HCT116 (cell line): ENCODE measurements at regions of chr2 and their contacts with region 1.

Region 1: GRCh38 chr2:23926750-23927571 is at the start of gene ATAD2B:
- DNase-seq: peak; percentile 85
- ATAC-seq: peak; percentile 93
- H3K4me3 ChIP-seq: peak within 1 kb of the TSS; percentile 79 to 84
- H3K27ac ChIP-seq: peak within 1 kb of the TSS; percentile 86
- H3K4me1 ChIP-seq: peaks cover 5 to 7% of the 10 kb centered on the region in 2 experiments; a peak in 2 of 4 replicates
- H3K27me3 ChIP-seq: no peaks in the 10 kb centered on the region
- CTCF ChIP-seq: peak; percentile 61 to 77 (median 71)
- POLR2A ChIP-seq: peak; percentile 76
- RAD21 ChIP-seq: peak; percentile 77
- total RNA-seq, gene ATAD2B: 9.6 TPM

Region 2: GRCh38 chr2:23824777-23825212 is 102.2 kb before region 1 on chr2:
- CTCF ChIA-PET with region 1: interaction called, 24 read pairs
- POLR2A ChIA-PET with region 1: no interaction called
- RAD21 ChIA-PET with region 1: interaction called in 1 of 2 experiments, 5 read pairs
- intact Hi-C with region 1: no loop called
- DNase-seq: peak; percentile 36
- ATAC-seq: peak; percentile 72
- H3K4me3 ChIP-seq: no peak overlapping the region
- H3K27ac ChIP-seq: no peak overlapping the region
- H3K4me1 ChIP-seq: no peaks in the 10 kb centered on the region; a peak in 1 of 4 replicates
- H3K27me3 ChIP-seq: no peaks in the 10 kb centered on the region
- CTCF ChIP-seq: peak; percentile 58 to 81 (median 81)
- POLR2A ChIP-seq: no peak
- RAD21 ChIP-seq: peak; percentile 77

Region 3: DNA sequence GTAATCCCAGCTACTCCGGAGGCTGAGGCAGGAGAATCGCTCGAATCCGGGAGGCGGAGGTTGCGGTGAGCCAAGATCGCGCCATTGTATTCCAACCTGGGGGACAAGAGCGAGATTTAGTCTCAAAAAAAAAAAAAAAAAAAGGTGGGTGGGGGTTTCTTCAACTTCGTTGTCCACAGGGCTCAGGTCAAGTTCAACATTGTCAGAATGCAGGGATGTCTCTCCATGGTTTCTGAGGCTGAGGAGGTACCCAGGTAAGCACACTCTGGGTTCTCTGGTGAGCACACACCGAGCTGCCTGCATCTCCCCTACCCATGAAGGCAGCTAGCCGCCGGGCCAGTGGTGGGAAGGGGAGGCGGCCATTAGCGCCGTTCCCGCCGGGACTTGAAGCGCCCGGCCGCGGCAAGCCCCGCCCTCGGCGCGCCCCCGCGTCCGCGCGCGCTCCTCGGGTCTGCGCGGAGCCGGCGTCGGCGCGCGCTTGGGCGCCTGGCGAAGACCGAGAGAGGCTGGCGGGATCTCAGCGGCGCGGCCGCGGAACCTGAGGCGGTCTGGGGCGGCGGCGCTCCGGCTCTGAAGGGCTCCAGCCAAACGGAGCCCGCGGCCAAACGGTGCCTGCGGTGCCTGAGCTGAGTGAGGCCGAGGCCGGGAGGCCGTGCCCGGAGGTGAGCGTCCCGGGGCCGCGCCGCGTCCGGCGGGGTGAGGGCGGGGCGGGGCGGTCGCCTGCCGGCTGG is 13.2 kb after region 1 on chr2 and contains the start of gene UBXN2A:
- CTCF ChIA-PET with region 1: interaction called, 10 read pairs
- POLR2A ChIA-PET with region 1: interaction called, 5 read pairs
- RAD21 ChIA-PET with region 1: interaction called in 1 of 2 experiments, 3 read pairs
- intact Hi-C with region 1: no loop called
- DNase-seq: peak; percentile 45
- ATAC-seq: peak; percentile 88
- H3K4me3 ChIP-seq: peak within 1 kb of the TSS; percentile 61 to 75
- H3K27ac ChIP-seq: peak within 1 kb of the TSS; percentile 70
- H3K4me1 ChIP-seq: peaks cover 4 to 30% of the 10 kb centered on the region in 2 experiments; a peak in 3 of 4 replicates
- H3K27me3 ChIP-seq: no peaks in the 10 kb centered on the region
- CTCF ChIP-seq: no peak
- POLR2A ChIP-seq: peak; percentile 84
- RAD21 ChIP-seq: no peak
- total RNA-seq, gene UBXN2A: 14.1 TPM

Region 4: GRCh38 chr2:24075915-24076848 is 149.2 kb after region 1 on chr2 and contains the start of gene SF3B6:
- CTCF ChIA-PET with region 1: interaction called, 9 read pairs
- POLR2A ChIA-PET with region 1: interaction called, 26 read pairs
- RAD21 ChIA-PET with region 1: interaction called in 1 of 2 experiments, 6 read pairs
- intact Hi-C with region 1: no loop called
- DNase-seq: peak; percentile 99
- ATAC-seq: peak; percentile 86
- H3K4me3 ChIP-seq: peak within 1 kb of the TSS; percentile 73 to 77
- H3K27ac ChIP-seq: peak within 1 kb of the TSS; percentile 81
- H3K4me1 ChIP-seq: peaks cover 4 to 15% of the 10 kb centered on the region in 2 experiments; a peak in 3 of 4 replicates
- H3K27me3 ChIP-seq: no peaks in the 10 kb centered on the region
- CTCF ChIP-seq: no peak
- POLR2A ChIP-seq: peak; percentile 63
- RAD21 ChIP-seq: no peak
- total RNA-seq, gene SF3B6: 129 TPM

Region 5: GRCh38 chr2:24164125-24164973 is 237.4 kb after region 1 on chr2:
- CTCF ChIA-PET with region 1: interaction called, 6 read pairs
- POLR2A ChIA-PET with region 1: no interaction called
- RAD21 ChIA-PET with region 1: no interaction called
- intact Hi-C with region 1: loop called (anchors 5 kb)
- DNase-seq: peak; percentile 22
- ATAC-seq: peak; percentile 86
- H3K4me3 ChIP-seq: no peak overlapping the region
- H3K27ac ChIP-seq: no peak overlapping the region
- H3K4me1 ChIP-seq: no peaks in the 10 kb centered on the region
- H3K27me3 ChIP-seq: no peaks in the 10 kb centered on the region
- CTCF ChIP-seq: peak; percentile 90 to 99 (median 93)
- POLR2A ChIP-seq: no peak
- RAD21 ChIP-seq: peak; percentile 83

Region 6: DNA sequence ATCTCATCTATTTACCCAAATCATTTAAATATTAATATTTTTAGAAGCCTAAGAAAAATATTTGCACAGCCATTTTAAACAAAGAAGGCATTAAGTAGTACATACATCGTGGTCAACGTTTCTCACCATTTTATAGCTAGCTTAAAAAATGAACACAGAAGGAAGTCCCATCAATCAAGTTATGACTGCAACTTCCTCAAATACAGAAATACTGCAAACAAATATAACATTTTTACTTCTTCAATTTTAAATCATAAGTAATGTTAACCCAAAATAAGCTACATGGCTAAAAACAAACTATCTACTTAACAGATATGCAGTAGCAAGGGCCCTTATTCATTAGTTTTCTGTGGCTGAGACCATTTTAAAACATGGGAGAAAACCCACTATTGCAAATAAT is 402.7 kb after region 1 on chr2:
- CTCF ChIA-PET with region 1: no interaction called
- POLR2A ChIA-PET with region 1: no interaction called
- RAD21 ChIA-PET with region 1: no interaction called
- intact Hi-C with region 1: no loop called
- DNase-seq: no peak
- ATAC-seq: no peak
- H3K4me3 ChIP-seq: no peak overlapping the region
- H3K27ac ChIP-seq: no peak overlapping the region
- H3K4me1 ChIP-seq: no peaks in the 10 kb centered on the region
- H3K27me3 ChIP-seq: no peaks in the 10 kb centered on the region
- CTCF ChIP-seq: no peak
- POLR2A ChIP-seq: no peak
- RAD21 ChIP-seq: no peak